Endothelial cell of umbilical vein (primary cell): ENCODE measurements at regions of chr7 and their contacts with region 1.

Region 1: DNA sequence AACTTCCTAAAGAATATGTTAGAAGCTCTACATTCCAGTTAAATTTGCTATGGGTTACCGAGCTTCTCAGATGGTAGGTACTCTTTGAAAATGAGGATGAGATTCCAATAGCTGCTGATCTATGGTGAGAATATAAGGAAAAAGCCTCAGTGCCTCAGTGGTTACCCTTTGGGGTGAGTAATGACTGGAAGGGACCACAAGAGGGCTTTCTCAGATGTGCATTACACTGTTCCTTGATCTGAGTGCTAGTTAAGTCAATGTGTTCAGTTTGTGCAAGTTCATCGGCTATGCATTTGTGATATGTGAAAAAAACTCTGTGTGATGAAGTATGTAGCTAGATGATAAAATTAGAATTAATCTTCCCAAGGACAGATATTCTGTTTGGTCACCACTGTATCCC is 3.5 kb downstream of the NRCAM start:
- DNase-seq: peak; percentile 69
- H3K4me3 ChIP-seq: no peak overlapping the region
- H3K27ac ChIP-seq: peak overlapping the region; percentile 59
- H3K4me1 ChIP-seq: peaks cover 49% of the 10 kb centered on the region
- H3K27me3 ChIP-seq: no peaks in the 10 kb centered on the region
- CTCF ChIP-seq: peak; percentile 49 to 69
- POLR2A ChIP-seq: no peak

Region 2: DNA sequence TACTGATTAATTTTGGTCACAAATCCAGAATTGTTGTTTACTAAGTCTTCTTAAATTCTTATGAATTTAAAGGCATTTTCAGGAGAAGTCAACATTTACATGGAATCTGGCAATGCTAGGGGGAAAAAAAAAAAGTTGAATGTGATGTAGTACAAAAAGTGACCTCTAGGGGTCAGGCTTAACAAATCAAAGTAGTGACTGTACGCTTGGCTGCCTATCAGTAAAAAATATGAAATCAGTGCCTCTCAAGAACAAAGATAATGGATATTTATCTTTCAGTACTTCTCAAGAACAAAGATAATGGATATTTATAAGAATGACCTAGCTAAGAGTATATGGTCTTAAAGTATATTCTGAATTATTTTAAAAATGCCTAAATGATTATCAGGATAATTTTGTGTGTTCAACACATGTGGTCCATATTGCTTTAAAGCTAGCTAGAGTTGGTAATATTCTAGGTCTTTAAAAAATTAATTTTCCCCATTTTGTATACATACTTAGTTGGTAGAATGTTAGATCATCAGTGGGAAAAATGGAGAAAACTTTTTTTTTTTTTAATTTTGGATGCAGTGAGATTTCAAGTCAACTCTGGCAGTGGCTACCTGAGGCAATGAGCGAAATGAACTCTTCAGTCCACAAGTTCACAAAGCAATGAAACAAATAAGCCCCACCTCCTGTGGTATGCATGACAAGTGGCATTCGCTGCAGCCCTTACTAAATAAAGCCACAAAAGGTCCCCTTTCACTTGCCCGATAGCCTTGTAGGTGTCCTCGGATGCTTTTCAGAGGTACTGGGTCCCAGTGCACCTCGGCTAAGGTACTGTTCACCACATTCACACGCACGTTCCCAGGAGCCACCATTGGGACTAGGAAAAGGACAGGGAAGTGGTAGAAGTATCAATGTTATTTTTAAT is 271.4 kb before region 1 on chr7:
- CTCF ChIA-PET with region 1: interaction called, 8 read pairs
- POLR2A ChIA-PET with region 1: no interaction called
- dilution Hi-C with region 1: no loop called
- intact Hi-C with region 1: loop called (anchors 1 kb)
- DNase-seq: peak; percentile 86
- H3K4me3 ChIP-seq: no peak overlapping the region
- H3K27ac ChIP-seq: no peak overlapping the region
- H3K4me1 ChIP-seq: no peaks in the 10 kb centered on the region
- H3K27me3 ChIP-seq: no peaks in the 10 kb centered on the region
- CTCF ChIP-seq: peak; percentile 32 to 54
- POLR2A ChIP-seq: no peak

Region 3: GRCh38 chr7:108308903-108309302 is 143.8 kb before region 1 on chr7:
- CTCF ChIA-PET with region 1: no interaction called
- POLR2A ChIA-PET with region 1: interaction called, 3 read pairs
- dilution Hi-C with region 1: no loop called
- intact Hi-C with region 1: loop called (anchors 2 kb)
- DNase-seq: peak; percentile 60
- H3K4me3 ChIP-seq: no peak overlapping the region
- H3K27ac ChIP-seq: peak overlapping the region; percentile 95
- H3K4me1 ChIP-seq: peaks cover 60% of the 10 kb centered on the region
- H3K27me3 ChIP-seq: no peaks in the 10 kb centered on the region
- CTCF ChIP-seq: no peak
- POLR2A ChIP-seq: no peak

Region 4: GRCh38 chr7:108442039-108442568 is 10.6 kb before region 1 on chr7:
- CTCF ChIA-PET with region 1: interaction called, 20 read pairs
- POLR2A ChIA-PET with region 1: no interaction called
- dilution Hi-C with region 1: no loop called
- intact Hi-C with region 1: no loop called
- DNase-seq: peak; percentile 43
- H3K4me3 ChIP-seq: no peak overlapping the region
- H3K27ac ChIP-seq: no peak overlapping the region
- H3K4me1 ChIP-seq: peaks cover 10% of the 10 kb centered on the region
- H3K27me3 ChIP-seq: no peaks in the 10 kb centered on the region
- CTCF ChIP-seq: no peak
- POLR2A ChIP-seq: no peak

Region 5: DNA sequence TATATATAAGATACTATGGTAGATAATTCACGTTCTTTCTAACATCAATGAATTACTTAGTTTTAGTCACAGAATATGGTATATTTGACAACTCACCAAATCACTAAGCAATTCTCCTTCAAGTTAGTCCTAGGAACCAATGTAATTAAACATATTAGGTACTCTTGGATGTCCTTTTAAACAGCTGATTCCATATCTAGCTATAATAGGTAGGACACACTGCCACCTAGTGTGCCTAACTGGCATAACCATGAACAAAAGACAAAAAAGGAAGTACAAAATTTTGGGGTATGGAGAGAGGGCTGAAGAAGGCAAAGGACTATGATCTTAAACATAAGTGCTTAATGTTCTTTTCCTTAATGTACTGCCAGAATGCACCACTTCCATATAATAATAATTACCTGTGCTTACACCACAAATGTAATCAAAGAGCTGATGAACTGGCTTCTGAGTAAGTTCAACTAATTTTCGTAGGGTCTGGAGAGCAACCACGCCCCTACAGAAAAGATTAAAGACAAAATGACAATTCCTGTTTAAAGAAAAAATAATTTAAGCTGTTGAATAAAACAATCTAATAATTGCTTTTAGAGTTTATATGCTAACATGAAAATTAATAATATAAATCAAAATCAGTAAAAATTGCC is 44.5 kb after region 1 on chr7:
- CTCF ChIA-PET with region 1: interaction called, 88 read pairs
- POLR2A ChIA-PET with region 1: no interaction called
- dilution Hi-C with region 1: no loop called
- intact Hi-C with region 1: loop called (anchors 1 kb)
- DNase-seq: peak; percentile 73
- H3K4me3 ChIP-seq: no peak overlapping the region
- H3K27ac ChIP-seq: no peak overlapping the region
- H3K4me1 ChIP-seq: peaks cover 8% of the 10 kb centered on the region
- H3K27me3 ChIP-seq: no peaks in the 10 kb centered on the region
- CTCF ChIP-seq: peak; percentile 43 to 61
- POLR2A ChIP-seq: no peak

Region 6: GRCh38 chr7:108613112-108613759 is 160.5 kb after region 1 on chr7:
- CTCF ChIA-PET with region 1: no interaction called
- POLR2A ChIA-PET with region 1: no interaction called
- dilution Hi-C with region 1: no loop called
- intact Hi-C with region 1: no loop called
- DNase-seq: peak; percentile 59
- H3K4me3 ChIP-seq: no peak overlapping the region
- H3K27ac ChIP-seq: no peak overlapping the region
- H3K4me1 ChIP-seq: no peaks in the 10 kb centered on the region
- H3K27me3 ChIP-seq: peaks cover 3 to 11% of the 10 kb centered on the region in 2 experiments
- CTCF ChIP-seq: peak; percentile 30 to 35
- POLR2A ChIP-seq: no peak